Activated T-helper 1 cell treated with anti-CD3 and anti-CD28 coated beads, Interleukin-12 subunit alpha, Interleukin-12 subunit beta, Interleukin-2, Interleukin-4 antibody, amounts not matched to agents 30 ng/mL and 10 ng/mL and 1 ng/mL, durations not matched to agents 14 hours and 24 hours and 36 hours (primary cell): ENCODE measurements at regions of chr5 and their contacts with region 1.

Region 1: GRCh38 chr5:116084871-116085715 is at the start of gene COMMD10:
- DNase-seq: peak; percentile 72
- H3K4me3 Mint-ChIP-seq: peak within 1 kb of the TSS; percentile 89
- H3K27ac Mint-ChIP-seq: peak within 1 kb of the TSS; percentile 86
- H3K4me1 Mint-ChIP-seq: peaks cover 30% of the 10 kb centered on the region
- H3K27me3 Mint-ChIP-seq: peaks cover 4% of the 10 kb centered on the region
- total RNA-seq, gene COMMD10: 21.8 and 23.6 TPM in 2 replicates

Region 2: GRCh38 chr5:115262321-115263077 is 822.6 kb before region 1 on chr5 and contains the start of gene PGGT1B:
- intact Hi-C with region 1: loop called (anchors 5 kb)
- DNase-seq: peak; percentile 64
- H3K4me3 Mint-ChIP-seq: peak within 1 kb of the TSS; percentile 97
- H3K27ac Mint-ChIP-seq: peak within 1 kb of the TSS; percentile 87
- H3K4me1 Mint-ChIP-seq: peaks cover 42% of the 10 kb centered on the region
- H3K27me3 Mint-ChIP-seq: peaks cover 3% of the 10 kb centered on the region
- total RNA-seq, gene PGGT1B: 42.7 and 42.9 TPM in 2 replicates

Region 3: DNA sequence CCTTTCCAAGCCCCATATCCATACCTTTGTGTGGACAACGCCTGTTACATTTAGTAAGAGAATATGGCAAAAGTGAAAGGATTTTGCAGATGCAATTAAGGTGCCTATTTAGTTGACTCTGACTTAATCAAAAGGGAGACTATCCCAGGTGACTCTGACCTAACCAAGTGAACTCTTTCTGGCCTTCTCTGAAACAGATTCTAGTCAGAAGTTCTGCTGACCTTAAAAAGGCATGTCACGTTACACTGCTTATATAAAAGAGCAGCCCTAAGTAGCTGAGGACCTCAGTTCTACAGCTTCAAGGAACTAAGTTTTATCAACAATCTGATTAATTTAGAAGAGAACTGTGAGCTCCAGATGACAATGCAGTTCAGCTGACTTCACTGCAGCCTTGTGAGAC is 477.2 kb before region 1 on chr5:
- intact Hi-C with region 1: no loop called
- DNase-seq: no peak
- H3K4me3 Mint-ChIP-seq: no peak overlapping the region
- H3K27ac Mint-ChIP-seq: no peak overlapping the region
- H3K4me1 Mint-ChIP-seq: peaks cover 8% of the 10 kb centered on the region
- H3K27me3 Mint-ChIP-seq: no peaks in the 10 kb centered on the region

Region 4: DNA sequence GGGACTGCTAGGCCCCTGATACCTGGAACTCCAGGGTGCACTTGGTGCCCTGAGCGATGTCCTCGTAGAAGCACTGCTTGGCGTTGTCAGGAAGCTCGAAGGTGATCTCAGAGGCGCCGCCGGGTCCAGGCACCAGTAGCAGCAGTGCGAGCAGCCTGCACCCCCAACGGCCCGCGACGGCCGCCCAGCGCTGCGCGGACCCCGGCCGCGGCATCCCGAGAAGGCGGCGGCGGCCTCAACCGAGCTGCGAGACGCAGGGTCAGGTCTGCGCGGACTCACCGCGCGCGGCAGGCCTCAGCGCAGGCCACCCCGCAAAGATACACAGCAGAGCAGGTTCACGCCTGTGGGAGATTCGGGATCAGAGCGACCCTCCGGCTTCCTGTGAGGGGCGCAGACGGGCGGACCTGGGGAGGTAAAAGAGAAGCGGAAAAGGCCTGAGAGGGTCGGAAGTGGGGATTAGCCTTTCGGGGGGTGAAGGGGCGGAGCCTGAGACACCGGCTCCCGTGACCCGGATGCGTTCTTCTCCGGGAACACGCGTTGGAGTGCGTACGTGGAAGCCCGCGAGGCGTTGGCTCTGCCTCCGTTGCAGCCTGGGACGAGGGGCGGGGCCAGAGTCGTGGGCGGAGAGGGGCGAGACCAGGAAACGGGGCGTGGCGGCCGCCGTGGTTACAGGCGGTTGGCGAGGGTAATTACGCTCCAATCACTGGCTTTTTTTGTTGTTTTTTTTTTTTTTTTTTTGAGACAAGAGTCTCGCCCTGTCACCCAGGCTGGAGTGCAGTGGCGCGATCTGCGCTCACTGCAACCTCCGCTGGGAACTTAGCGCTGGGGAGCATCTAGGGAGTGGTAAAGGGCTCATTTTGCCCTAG is 459.3 kb before region 1 on chr5 and contains the start of gene TMED7:
- intact Hi-C with region 1: loop called (anchors 5 kb)
- DNase-seq: peak; percentile 99
- H3K4me3 Mint-ChIP-seq: no peak within 1 kb of the TSS
- H3K27ac Mint-ChIP-seq: peak within 1 kb of the TSS; percentile 88
- H3K4me1 Mint-ChIP-seq: peaks cover 32% of the 10 kb centered on the region
- H3K27me3 Mint-ChIP-seq: peaks cover 12% of the 10 kb centered on the region
- total RNA-seq, gene TMED7: 43.4 and 44.0 TPM in 2 replicates

Region 5: GRCh38 chr5:115657881-115658233 is 427.2 kb before region 1 on chr5:
- intact Hi-C with region 1: no loop called
- DNase-seq: no peak
- H3K4me3 Mint-ChIP-seq: no peak overlapping the region
- H3K27ac Mint-ChIP-seq: no peak overlapping the region
- H3K4me1 Mint-ChIP-seq: no peaks in the 10 kb centered on the region
- H3K27me3 Mint-ChIP-seq: peaks cover 22% of the 10 kb centered on the region

Region 6: GRCh38 chr5:116521173-116521872 is 436.2 kb after region 1 on chr5:
- intact Hi-C with region 1: no loop called
- DNase-seq: no peak
- H3K4me3 Mint-ChIP-seq: no peak overlapping the region
- H3K27ac Mint-ChIP-seq: no peak overlapping the region
- H3K4me1 Mint-ChIP-seq: no peaks in the 10 kb centered on the region
- H3K27me3 Mint-ChIP-seq: no peaks in the 10 kb centered on the region